ACHN (cell line): ENCODE measurements at regions of chr16 and their contacts with region 1.

Region 1: GRCh38 chr16:88533932-88534732 is 36.1 kb upstream of the ZC3H18 start:
- DNase-seq: peak; percentile 80

Region 2: GRCh38 chr16:88303890-88304819 is 230.0 kb before region 1 on chr16:
- in situ Hi-C with region 1: no loop called
- DNase-seq: peak; percentile 18

Region 3: GRCh38 chr16:88442727-88443576 is 91.2 kb before region 1 on chr16:
- in situ Hi-C with region 1: loop called (anchors 25 kb)
- DNase-seq: peak; percentile 79